SK-N-SH (cell line): ENCODE measurements at regions of chr6 and their contacts with region 1.

Region 1: DNA sequence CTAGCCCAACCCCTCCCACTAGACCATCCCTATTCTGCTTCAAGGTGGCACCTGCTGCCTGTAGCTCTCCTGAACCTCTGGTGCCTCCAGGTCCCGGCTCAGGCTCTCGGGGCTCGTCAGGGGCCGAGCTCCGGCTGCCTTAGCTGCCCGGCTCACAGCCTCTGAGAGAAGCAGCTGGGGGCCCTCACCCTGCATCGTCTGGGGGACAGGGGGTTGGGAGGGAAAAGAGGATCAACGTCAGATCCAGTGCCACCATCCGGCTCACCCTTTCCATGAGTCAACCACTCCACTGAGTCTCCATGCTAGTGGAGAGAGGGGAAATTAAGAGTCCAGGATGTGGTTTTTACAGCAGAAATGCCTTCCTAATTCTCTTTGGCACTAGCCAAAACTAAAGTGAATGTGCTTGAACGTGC is 13.0 kb downstream of the BAG6 start:
- DNase-seq: no peak
- H3K4me3 ChIP-seq: no peak overlapping the region
- H3K27ac ChIP-seq: peak overlapping the region in 1 of 2 experiments; percentile 65; a peak in 2 of 4 replicates
- H3K4me1 ChIP-seq: no peaks in the 10 kb centered on the region
- H3K27me3 ChIP-seq: no peaks in the 10 kb centered on the region
- CTCF ChIP-seq: no peak
- EP300 ChIP-seq: no peak
- RAD21 ChIP-seq: no peak

Region 2: GRCh38 chr6:31197559-31198305 is 441.7 kb before region 1 on chr6:
- CTCF ChIA-PET with region 1: no interaction called
- POLR2A ChIA-PET with region 1: no interaction called
- DNase-seq: peak; percentile 61
- H3K4me3 ChIP-seq: peak overlapping the region; percentile 71 to 100
- H3K27ac ChIP-seq: peak overlapping the region; percentile 58 to 89
- H3K4me1 ChIP-seq: peaks cover 0 to 5% of the 10 kb centered on the region in 2 experiments; a peak in 1 of 4 replicates
- H3K27me3 ChIP-seq: no peaks in the 10 kb centered on the region
- CTCF ChIP-seq: no peak
- EP300 ChIP-seq: no peak
- RAD21 ChIP-seq: no peak

Region 3: DNA sequence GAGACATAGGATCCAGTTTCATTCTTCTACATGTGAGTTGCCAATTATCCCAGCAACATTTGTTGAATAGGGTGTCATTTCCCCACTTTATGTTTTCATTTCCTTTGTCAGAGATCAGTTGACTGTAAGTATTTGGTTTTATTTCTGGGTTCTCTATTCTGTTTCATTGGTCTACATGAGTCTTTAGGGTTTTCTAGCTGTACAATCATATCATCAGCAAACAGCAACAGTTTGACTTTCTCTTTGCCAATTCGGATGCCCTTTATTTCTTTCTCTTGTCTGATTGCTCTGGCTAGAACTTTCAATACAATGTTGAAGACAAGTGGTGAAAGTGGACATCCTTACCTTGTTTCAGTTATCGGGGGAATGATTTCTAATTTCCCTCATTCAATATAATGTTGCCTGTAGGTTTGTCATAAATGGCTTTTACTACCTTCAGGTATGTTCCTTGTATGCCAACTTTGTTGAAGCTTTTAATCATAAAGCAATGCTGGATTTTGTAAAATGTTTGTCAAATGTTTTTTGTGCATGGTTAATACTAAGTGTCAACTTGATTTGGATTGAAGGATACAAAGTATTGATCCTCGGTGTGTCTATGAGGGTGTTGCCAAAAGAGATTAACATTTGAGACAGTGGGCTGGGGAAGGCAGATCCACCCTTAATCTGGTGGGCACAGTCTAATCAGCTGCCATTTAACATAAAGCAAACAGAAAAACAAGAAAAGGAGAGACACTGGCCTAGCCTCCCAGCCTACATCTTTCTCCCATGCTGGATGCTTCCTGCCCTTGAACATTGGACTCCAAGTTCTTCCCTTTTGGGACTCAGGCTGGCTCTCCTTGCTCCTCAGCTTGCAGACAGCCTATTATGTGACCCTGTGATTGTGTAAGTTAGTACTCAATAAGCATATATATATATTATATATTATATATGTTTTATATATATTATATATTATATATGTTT is 212.8 kb before region 1 on chr6:
- CTCF ChIA-PET with region 1: no interaction called
- POLR2A ChIA-PET with region 1: no interaction called
- DNase-seq: no peak
- H3K4me3 ChIP-seq: no peak overlapping the region
- H3K27ac ChIP-seq: no peak overlapping the region
- H3K4me1 ChIP-seq: no peaks in the 10 kb centered on the region
- H3K27me3 ChIP-seq: peaks cover 14% of the 10 kb centered on the region; the same call in 1 of the 2 replicates
- CTCF ChIP-seq: no peak
- EP300 ChIP-seq: no peak
- RAD21 ChIP-seq: no peak

Region 4: GRCh38 chr6:31665501-31666336 is 26.3 kb after region 1 on chr6 and contains the start of gene CSNK2B:
- CTCF ChIA-PET with region 1: interaction called, 5 read pairs
- POLR2A ChIA-PET with region 1: interaction called, 10 read pairs
- DNase-seq: peak; percentile 96
- H3K4me3 ChIP-seq: peak within 1 kb of the TSS; percentile 86 to 89
- H3K27ac ChIP-seq: peak within 1 kb of the TSS; percentile 87 to 92
- H3K4me1 ChIP-seq: peaks cover 17 to 18% of the 10 kb centered on the region in 2 experiments; a peak in 3 of 4 replicates
- H3K27me3 ChIP-seq: no peaks in the 10 kb centered on the region
- CTCF ChIP-seq: no peak
- EP300 ChIP-seq: peak in 1 of 2 experiments; percentile 5; a peak in 1 of 4 replicates
- RAD21 ChIP-seq: no peak
- polyA plus RNA-seq, gene CSNK2B: 97.3 and 101 TPM in 2 replicates